CD8-positive, alpha-beta memory T cell (primary cell): ENCODE measurements at regions of chr14 and their contacts with region 1.

Region 1: GRCh38 chr14:71320107-71320733 is 413.0 kb downstream of the PCNX1 start:
- DNase-seq: peak; percentile 98 to 100 (median 98)
- H3K4me3 ChIP-seq: peak within 1 kb of the TSS; percentile 80
- H3K4me3 Mint-ChIP-seq: peak within 1 kb of the TSS; percentile 89 to 97 (median 94)
- H3K27ac ChIP-seq: peak within 1 kb of the TSS; percentile 84
- H3K27ac Mint-ChIP-seq: peak within 1 kb of the TSS; percentile 94 to 99 (median 98)
- H3K4me1 ChIP-seq: peaks cover 35% of the 10 kb centered on the region
- H3K4me1 Mint-ChIP-seq: peaks cover 42 to 50% (median 48%) of the 10 kb centered on the region in 3 donors
- H3K27me3 ChIP-seq: no peaks in the 10 kb centered on the region
- H3K27me3 Mint-ChIP-seq: peaks cover 0 to 6% of the 10 kb centered on the region in 2 donors

Region 2: DNA sequence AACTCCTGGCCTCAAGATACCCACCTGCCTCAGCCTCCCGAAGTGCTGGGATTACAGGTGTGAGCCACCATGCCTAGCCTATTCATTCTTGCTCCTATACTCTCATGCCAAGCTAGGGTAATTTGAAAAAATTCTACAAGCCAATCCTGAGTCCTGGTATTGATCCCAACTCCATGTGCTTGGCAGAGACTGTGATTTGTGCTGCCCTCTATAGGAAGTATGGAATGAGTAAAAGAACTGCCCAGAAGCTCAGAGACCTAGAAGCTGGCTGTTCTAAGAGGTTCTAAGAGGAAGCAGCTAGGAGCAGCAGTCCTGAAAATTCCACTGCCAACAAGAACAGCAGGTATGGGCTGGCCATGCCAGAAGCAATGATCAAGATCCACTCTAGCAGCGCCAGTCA is 10.5 kb before region 1 on chr14:
- CTCF ChIA-PET with region 1: no interaction called
- POLR2A ChIA-PET with region 1: no interaction called
- DNase-seq: no peak
- H3K4me3 ChIP-seq: no peak overlapping the region
- H3K4me3 Mint-ChIP-seq: peak overlapping the region in 1 of 7 donors; percentile 1
- H3K27ac ChIP-seq: no peak overlapping the region
- H3K27ac Mint-ChIP-seq: no peak overlapping the region
- H3K4me1 ChIP-seq: no peaks in the 10 kb centered on the region
- H3K4me1 Mint-ChIP-seq: no peaks in the 10 kb centered on the region
- H3K27me3 ChIP-seq: no peaks in the 10 kb centered on the region
- H3K27me3 Mint-ChIP-seq: peaks cover 5 to 37% of the 10 kb centered on the region in 2 donors

Region 3: DNA sequence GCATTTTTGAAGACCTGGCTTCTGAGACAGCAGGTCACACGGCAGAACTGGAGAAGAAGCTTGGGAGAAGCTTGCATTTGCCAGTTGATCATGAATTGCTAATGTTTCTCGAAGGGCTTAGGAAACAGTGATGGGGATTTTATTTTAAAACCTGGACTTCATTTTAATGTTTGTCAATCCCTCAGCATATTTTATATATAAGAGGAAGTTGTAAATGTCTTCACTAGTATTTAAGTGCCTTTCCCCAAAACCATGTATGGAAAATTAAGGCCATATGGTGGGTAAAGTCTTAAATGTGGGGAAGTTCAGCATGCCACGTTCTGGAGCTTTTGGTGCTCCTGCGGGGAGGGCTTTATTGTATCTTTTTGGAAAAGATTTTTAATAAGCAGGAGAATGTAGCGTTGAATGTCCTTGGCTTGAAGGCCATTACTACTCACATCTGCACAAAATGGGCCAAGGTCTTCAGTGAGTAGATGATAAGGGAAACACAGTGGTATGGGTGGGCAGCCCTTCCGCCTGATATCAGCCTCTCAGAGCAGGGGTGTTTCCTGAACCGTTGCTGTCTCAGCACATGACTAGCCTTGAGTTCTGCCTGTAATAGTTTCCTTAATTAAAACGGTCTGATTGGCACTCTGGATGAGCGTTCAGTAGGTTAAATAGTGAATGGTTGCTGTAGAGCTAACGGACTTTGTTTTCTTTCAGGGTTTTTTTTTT is 98.5 kb after region 1 on chr14:
- CTCF ChIA-PET with region 1: no interaction called
- POLR2A ChIA-PET with region 1: no interaction called
- DNase-seq: no peak
- H3K4me3 ChIP-seq: no peak overlapping the region
- H3K4me3 Mint-ChIP-seq: no peak overlapping the region
- H3K27ac ChIP-seq: no peak overlapping the region
- H3K27ac Mint-ChIP-seq: peak overlapping the region in 2 of 8 donors; percentile 11 to 50
- H3K4me1 ChIP-seq: no peaks in the 10 kb centered on the region
- H3K4me1 Mint-ChIP-seq: no peaks in the 10 kb centered on the region
- H3K27me3 ChIP-seq: no peaks in the 10 kb centered on the region
- H3K27me3 Mint-ChIP-seq: no peaks in the 10 kb centered on the region

Region 4: GRCh38 chr14:71555654-71556559 is 235.7 kb after region 1 on chr14:
- CTCF ChIA-PET with region 1: no interaction called
- POLR2A ChIA-PET with region 1: interaction called, 10 read pairs
- DNase-seq: peak; percentile 29 to 67 (median 57)
- H3K4me3 ChIP-seq: peak overlapping the region; percentile 26
- H3K4me3 Mint-ChIP-seq: peak overlapping the region; percentile 53 to 89 (median 76)
- H3K27ac ChIP-seq: peak overlapping the region; percentile 59
- H3K27ac Mint-ChIP-seq: peak overlapping the region; percentile 91 to 99 (median 94)
- H3K4me1 ChIP-seq: peaks cover 48% of the 10 kb centered on the region
- H3K4me1 Mint-ChIP-seq: peaks cover 63 to 83% (median 68%) of the 10 kb centered on the region in 3 donors
- H3K27me3 ChIP-seq: no peaks in the 10 kb centered on the region
- H3K27me3 Mint-ChIP-seq: no peaks in the 10 kb centered on the region